Activated T-helper 2 cell treated with anti-CD3 and anti-CD28 coated beads, Interferon-gamma antibody, Interleukin-2, Interleukin-4, amounts not matched to agents 10 μg/mL and 5 μg/mL and 100 μg/mL, durations not matched to agents 14 hours and 24 hours and 36 hours (primary cell): ENCODE measurements at regions of chr1 and their contacts with region 1.

Region 1: DNA sequence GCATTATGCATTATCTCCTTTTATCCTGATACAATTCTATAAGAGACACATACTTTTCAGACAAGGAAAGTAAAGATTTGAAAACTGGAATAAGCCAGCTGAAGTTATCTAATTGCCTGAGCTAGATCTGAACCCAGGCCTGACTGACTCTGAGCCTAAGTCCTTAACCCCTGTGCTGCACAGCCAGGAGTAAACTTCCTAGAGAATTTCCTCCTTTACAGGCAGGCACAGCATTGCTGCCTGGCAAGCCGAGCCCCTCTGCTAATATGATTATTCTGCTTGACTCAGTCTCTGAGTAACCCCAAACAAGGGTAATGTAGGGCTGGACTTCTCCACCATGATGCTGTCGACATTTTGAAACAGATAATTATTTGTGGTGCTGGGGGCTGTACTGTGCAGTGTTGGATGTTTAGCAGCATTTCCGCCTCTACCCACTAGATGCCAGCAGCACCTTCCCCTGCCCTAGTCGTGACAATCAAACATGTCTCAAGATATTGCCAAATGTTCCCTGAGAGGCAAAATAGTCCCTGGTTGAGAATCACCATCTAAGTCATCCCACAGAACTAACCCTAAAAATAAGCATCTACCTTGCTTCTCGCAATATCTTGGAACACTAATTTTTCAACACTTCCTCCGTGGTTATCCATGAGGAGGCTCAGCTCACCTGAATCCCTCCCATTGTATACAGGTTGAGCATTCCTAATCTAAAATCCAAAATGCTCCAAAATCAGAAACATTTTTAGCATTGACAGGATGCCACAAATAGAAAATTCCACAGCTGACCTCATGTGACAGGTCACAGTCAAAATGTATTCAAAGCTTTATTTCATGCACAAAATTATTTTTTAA is 18.5 kb downstream of the CAMK1G start:
- DNase-seq: no peak
- H3K4me3 Mint-ChIP-seq: no peak overlapping the region
- H3K27ac Mint-ChIP-seq: no peak overlapping the region
- H3K4me1 Mint-ChIP-seq: peaks cover 4% of the 10 kb centered on the region
- H3K27me3 Mint-ChIP-seq: peaks cover 27% of the 10 kb centered on the region

Region 2: GRCh38 chr1:209627732-209628196 is 25.7 kb after region 1 on chr1:
- intact Hi-C with region 1: loop called (anchors 1 kb)
- DNase-seq: peak; percentile 63
- H3K4me3 Mint-ChIP-seq: no peak overlapping the region
- H3K27ac Mint-ChIP-seq: no peak overlapping the region
- H3K4me1 Mint-ChIP-seq: peaks cover 4% of the 10 kb centered on the region
- H3K27me3 Mint-ChIP-seq: peaks cover 2% of the 10 kb centered on the region

Region 3: DNA sequence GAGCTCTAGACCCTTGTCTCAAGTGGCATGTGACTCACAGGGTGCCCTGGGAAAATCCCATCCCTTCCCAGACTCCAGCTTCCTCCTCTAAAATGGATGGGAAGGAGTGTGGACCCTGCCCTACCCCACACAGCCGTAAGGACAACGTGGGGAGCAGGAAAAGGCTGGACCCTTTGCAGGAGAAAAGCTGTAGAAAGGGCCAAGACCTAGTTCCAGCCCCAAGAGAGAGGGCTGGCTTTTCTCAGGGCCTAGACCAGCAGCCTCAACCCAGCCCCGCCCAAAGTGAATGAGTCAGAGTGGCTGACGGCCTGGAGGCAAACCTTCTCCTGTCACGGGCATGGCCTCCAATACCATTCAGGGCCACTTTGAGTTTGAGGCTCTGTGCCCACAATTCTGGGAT is 49.1 kb after region 1 on chr1:
- intact Hi-C with region 1: loop called (anchors 5 kb)
- DNase-seq: peak; percentile 65
- H3K4me3 Mint-ChIP-seq: no peak overlapping the region
- H3K27ac Mint-ChIP-seq: peak overlapping the region; percentile 83
- H3K4me1 Mint-ChIP-seq: peaks cover 55% of the 10 kb centered on the region
- H3K27me3 Mint-ChIP-seq: no peaks in the 10 kb centered on the region

Region 4: GRCh38 chr1:209755926-209756614 is 154.0 kb after region 1 on chr1 and contains the start of gene TRAF3IP3:
- intact Hi-C with region 1: no loop called
- DNase-seq: peak; percentile 75
- H3K4me3 Mint-ChIP-seq: peak within 1 kb of the TSS; percentile 97
- H3K27ac Mint-ChIP-seq: peak within 1 kb of the TSS; percentile 97
- H3K4me1 Mint-ChIP-seq: peaks cover 65% of the 10 kb centered on the region
- H3K27me3 Mint-ChIP-seq: no peaks in the 10 kb centered on the region
- total RNA-seq, gene TRAF3IP3: 386 and 390 TPM in 2 replicates

Region 5: DNA sequence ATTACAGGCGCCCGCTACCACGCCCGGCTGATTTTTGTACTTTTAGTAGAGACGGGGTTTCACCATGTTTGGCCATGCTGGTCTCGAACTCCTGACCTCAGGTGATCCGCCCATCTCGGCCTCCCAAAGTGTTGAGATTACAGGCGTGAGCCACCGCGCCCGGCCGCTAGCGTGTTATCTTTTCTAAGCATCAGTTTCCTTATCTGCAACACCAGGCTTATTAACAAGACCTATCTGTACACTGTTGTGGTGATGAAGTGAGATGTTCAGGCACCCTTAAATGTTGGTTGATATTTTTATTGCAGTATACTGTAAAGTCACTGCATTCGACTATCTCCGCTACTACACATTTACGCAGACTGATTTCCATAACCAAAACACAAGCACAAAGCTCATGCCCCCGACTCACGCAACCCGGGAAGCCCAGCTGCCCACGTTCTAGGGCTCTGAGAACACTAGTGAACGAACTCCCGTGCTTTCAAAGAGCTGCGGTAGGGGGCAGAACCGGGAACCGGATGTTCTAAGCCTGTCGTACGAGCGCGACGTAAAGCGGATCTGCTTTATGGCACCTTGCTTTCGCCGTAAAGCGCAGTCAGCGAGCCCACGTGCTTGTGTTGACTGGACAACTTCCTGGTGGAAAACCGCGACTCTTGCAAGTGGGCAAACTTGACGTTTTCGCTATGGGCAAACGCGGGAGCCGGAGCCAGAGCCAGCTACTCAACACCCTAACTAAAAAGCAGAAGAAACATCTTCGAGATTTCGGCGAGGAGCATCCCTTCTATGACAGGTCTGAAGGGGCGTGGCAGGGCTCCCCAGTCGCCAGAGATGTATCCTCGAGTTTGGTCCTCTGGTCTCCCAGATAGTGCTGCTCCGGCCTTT is 225.6 kb after region 1 on chr1 and contains the start of gene UTP25:
- intact Hi-C with region 1: no loop called
- DNase-seq: peak; percentile 89
- H3K4me3 Mint-ChIP-seq: peak within 1 kb of the TSS; percentile 89
- H3K27ac Mint-ChIP-seq: peak within 1 kb of the TSS; percentile 86
- H3K4me1 Mint-ChIP-seq: peaks cover 47% of the 10 kb centered on the region
- H3K27me3 Mint-ChIP-seq: peaks cover 6% of the 10 kb centered on the region
- total RNA-seq, gene UTP25: 18.7 and 19.6 TPM in 2 replicates